ENCODE measurements at regions of chr6 and their contacts with region 1.

Region 1: GRCh38 chr6:150425508-150425907 is 56.7 kb downstream of the IYD start:
- DNase-seq: no peak
- H3K4me3 ChIP-seq: no peak overlapping the region
- H3K4me3 Mint-ChIP-seq: no peak overlapping the region
- H3K27ac ChIP-seq: no peak overlapping the region
- H3K27ac Mint-ChIP-seq: no peak overlapping the region
- H3K4me1 ChIP-seq: no peaks in the 10 kb centered on the region
- H3K4me1 Mint-ChIP-seq: no peaks in the 10 kb centered on the region
- H3K27me3 ChIP-seq: no peaks in the 10 kb centered on the region
- H3K27me3 Mint-ChIP-seq: peaks cover 0 to 1% of the 10 kb centered on the region in 2 donors

Region 2: GRCh38 chr6:150439373-150439772 is 13.9 kb after region 1 on chr6:
- CTCF ChIA-PET with region 1: no interaction called
- POLR2A ChIA-PET with region 1: no interaction called
- intact Hi-C with region 1: no loop called
- DNase-seq: no peak
- H3K4me3 ChIP-seq: no peak overlapping the region
- H3K4me3 Mint-ChIP-seq: no peak overlapping the region
- H3K27ac ChIP-seq: no peak overlapping the region
- H3K27ac Mint-ChIP-seq: no peak overlapping the region
- H3K4me1 ChIP-seq: no peaks in the 10 kb centered on the region
- H3K4me1 Mint-ChIP-seq: peaks cover 0 to 2% (median 0%) of the 10 kb centered on the region in 4 donors
- H3K27me3 ChIP-seq: no peaks in the 10 kb centered on the region
- H3K27me3 Mint-ChIP-seq: peaks cover 1 to 2% of the 10 kb centered on the region in 2 donors

Region 3: DNA sequence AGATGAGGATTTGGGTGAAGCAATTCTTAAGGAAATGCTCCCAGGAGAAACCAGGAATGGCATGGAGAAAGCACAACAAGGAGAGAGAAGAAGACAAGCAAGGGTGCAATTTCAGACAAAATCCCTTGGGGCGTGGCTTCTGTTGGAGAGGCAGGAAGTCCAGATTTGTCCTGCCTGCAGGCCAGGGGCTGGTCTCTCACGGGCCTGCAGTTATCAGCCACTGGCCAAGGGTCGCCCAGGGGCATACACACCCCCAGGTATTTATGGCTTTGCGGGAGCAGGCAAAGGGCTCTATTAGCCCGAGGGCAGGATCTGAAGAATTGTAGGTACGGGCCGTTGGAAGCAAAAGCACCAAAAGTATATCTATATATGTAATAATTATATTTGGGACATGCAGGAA is 30.9 kb after region 1 on chr6:
- CTCF ChIA-PET with region 1: interaction called, 5 read pairs
- POLR2A ChIA-PET with region 1: no interaction called
- intact Hi-C with region 1: loop called (anchors 1 kb)
- DNase-seq: no peak
- H3K4me3 ChIP-seq: no peak overlapping the region
- H3K4me3 Mint-ChIP-seq: no peak overlapping the region
- H3K27ac ChIP-seq: no peak overlapping the region
- H3K27ac Mint-ChIP-seq: no peak overlapping the region
- H3K4me1 ChIP-seq: no peaks in the 10 kb centered on the region
- H3K4me1 Mint-ChIP-seq: peaks cover 0 to 10% (median 0%) of the 10 kb centered on the region in 4 donors
- H3K27me3 ChIP-seq: no peaks in the 10 kb centered on the region
- H3K27me3 Mint-ChIP-seq: peaks cover 0 to 3% of the 10 kb centered on the region in 2 donors